Heart right ventricle (tissue), 16 donors: ENCODE measurements at regions of chr3 and their contacts with region 1.

Region 1: DNA sequence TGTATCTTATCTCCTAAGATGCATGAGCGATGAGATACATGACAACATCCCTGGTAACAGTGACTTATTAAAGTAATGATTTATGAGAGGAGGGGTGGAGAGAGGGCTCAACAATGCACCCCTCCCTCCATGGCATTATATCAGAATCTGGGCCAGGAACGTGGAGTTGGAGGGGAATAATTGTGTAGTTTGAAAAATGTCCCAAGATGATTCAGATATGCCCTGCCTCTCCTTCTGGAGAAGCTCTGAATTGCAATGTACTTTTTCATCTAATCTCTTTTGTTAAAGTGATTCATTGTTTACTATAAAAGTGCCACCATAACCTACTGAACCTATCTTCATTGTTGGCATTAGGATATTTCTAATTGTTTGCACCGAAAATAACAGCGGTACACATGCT is 86.5 kb downstream of the FRMD4B start:
- DNase-seq: no peak
- ATAC-seq: no peak
- H3K4me3 ChIP-seq: no peak overlapping the region
- H3K27ac ChIP-seq: no peak overlapping the region
- H3K4me1 ChIP-seq: peaks cover 2 to 15% (median 7%) of the 10 kb centered on the region in 9 donors
- H3K27me3 ChIP-seq: no peaks in the 10 kb centered on the region
- CTCF ChIP-seq: no peak

Region 2: GRCh38 chr3:69200384-69201068 is 98.8 kb before region 1 on chr3:
- intact Hi-C with region 1: loop called in 2 of 10 experiments (anchors 5 kb)
- DNase-seq: peak in 1 of 2 donors; percentile 35
- ATAC-seq: peak; percentile 61 to 87 (median 75)
- H3K4me3 ChIP-seq: peak overlapping the region; percentile 10 to 49 (median 40)
- H3K27ac ChIP-seq: peak overlapping the region in 9 of 10 donors; percentile 28 to 81 (median 70)
- H3K4me1 ChIP-seq: peaks cover 0 to 45% (median 26%) of the 10 kb centered on the region in 9 donors
- H3K27me3 ChIP-seq: no peaks in the 10 kb centered on the region
- CTCF ChIP-seq: no peak

Region 3: DNA sequence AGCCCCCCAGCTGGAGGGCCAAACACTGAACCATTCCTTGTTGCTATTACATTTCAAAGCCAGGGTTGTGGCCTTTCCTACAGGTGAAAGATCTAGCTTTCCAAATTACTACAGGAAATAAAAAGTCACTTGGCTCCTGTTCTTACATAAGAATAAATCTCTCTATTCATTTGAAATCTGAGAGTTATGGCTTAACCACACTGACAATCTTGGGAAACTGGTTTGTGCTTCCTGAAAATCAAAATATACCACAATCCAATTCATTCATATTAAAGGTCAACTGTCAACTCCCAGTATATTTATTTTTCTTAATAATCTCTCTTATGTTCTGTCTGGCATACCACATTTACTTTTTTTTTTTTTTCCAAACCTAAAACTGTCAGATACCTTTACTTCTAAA is 73.3 kb before region 1 on chr3:
- intact Hi-C with region 1: loop called in 2 of 10 experiments (anchors 5 to 10 kb)
- DNase-seq: no peak
- ATAC-seq: no peak
- H3K4me3 ChIP-seq: no peak overlapping the region
- H3K27ac ChIP-seq: no peak overlapping the region
- H3K4me1 ChIP-seq: peaks cover 0 to 11% (median 0%) of the 10 kb centered on the region in 9 donors
- H3K27me3 ChIP-seq: no peaks in the 10 kb centered on the region
- CTCF ChIP-seq: no peak

Region 4: DNA sequence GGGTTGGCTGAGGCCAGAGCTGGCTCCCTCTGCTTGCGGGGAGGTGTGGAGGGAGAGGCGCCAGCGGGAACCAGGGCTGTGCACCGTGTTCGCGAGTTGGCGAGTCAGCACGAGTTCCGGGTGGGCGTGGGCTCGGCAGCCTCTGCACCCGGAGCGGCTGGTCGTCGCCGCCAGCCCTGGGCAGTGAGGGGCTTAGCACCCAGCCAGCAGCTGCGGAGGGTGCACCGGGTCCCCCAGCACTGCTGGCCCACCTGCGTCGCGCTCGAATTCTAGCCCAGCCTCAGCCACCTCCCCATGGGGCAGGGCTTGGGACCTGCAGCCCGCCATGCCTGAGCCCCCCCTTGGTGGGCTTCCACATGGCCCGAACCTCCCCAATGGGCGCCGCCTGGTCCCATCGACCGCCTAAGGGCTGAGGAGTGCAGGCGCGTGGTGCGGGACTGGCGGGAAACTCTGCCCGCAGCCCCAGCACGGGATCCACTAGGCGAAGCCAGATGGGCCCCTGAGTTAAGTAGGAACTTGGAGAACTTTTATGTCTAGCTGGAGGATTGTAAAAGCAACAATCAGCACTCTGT is 39.1 kb before region 1 on chr3:
- intact Hi-C with region 1: loop called in 1 of 10 experiments (anchors 1 kb)
- DNase-seq: no peak
- ATAC-seq: no peak
- H3K4me3 ChIP-seq: no peak overlapping the region
- H3K27ac ChIP-seq: no peak overlapping the region
- H3K4me1 ChIP-seq: no peaks in the 10 kb centered on the region
- H3K27me3 ChIP-seq: no peaks in the 10 kb centered on the region
- CTCF ChIP-seq: no peak

Region 5: GRCh38 chr3:69439643-69440270 is 140.4 kb after region 1 on chr3:
- intact Hi-C with region 1: no loop called
- DNase-seq: peak in 1 of 2 donors; percentile 13
- ATAC-seq: peak in 5 of 8 donors; percentile 11 to 49 (median 39)
- H3K4me3 ChIP-seq: peak overlapping the region in 4 of 10 donors; percentile 12 to 33 (median 20)
- H3K27ac ChIP-seq: peak overlapping the region in 1 of 10 donors; percentile 54
- H3K4me1 ChIP-seq: peaks cover 0 to 22% (median 0%) of the 10 kb centered on the region in 9 donors
- H3K27me3 ChIP-seq: no peaks in the 10 kb centered on the region
- CTCF ChIP-seq: peak in 8 of 9 donors; percentile 39 to 73 (median 68)

Region 6: DNA sequence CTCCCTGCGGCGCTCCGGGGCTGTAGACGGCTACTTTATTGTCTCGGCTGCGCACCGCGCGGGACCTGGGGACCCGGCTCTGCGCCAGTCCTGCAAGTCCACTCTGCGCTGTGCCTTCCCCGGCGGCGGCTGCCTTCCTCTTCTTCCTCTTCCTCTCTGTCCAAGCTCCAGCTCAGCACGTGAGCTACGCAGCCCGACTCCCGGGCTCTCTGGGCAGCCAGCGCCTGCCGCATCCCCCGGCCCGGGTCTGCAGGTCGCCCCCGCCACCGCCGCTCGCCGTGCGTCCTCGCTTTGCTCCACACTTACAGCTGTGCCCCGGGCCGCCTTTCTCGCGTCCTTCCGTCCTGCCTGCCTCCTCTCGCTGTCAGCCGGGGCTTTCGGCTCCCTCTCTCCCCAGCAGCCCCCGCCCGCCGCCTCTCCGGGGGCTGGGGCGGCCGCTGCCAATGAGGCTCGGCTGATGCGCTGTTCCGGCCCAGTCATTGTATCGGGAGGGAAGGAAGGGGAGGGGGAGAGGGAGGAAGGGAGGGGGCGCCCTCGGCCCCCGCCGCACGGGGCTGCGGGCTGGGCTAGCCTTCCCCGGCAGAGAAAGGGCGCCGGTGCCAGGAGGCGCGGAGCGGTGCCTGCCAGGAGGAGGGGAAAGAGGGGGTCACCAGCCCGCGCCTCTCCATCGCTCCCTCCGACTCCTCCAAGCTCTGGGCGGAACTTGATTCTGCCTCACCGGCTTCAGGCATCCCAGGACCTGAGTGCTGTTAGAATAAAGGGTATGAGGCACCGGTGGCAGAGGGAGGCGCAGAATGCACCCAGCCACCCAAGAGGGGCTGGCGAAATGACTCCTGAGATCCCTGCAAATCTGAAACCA is 243.1 kb after region 1 on chr3:
- intact Hi-C with region 1: no loop called
- DNase-seq: peak in 1 of 2 donors; percentile 35
- ATAC-seq: peak; percentile 47 to 87 (median 68)
- H3K4me3 ChIP-seq: peak overlapping the region; percentile 41 to 81 (median 67)
- H3K27ac ChIP-seq: peak overlapping the region in 8 of 10 donors; percentile 2 to 72 (median 54)
- H3K4me1 ChIP-seq: peaks cover 0 to 35% (median 14%) of the 10 kb centered on the region in 9 donors
- H3K27me3 ChIP-seq: peaks cover 0 to 35% (median 13%) of the 10 kb centered on the region in 7 donors
- CTCF ChIP-seq: no peak